GM12878 (cell line): ENCODE measurements at regions of chr1 and their contacts with region 1.

Region 1: GRCh38 chr1:161098210-161099068 is at the start of gene KLHDC9:
- DNase-seq: peak; percentile 87
- ATAC-seq: peak; percentile 91
- H3K4me3 ChIP-seq: peak within 1 kb of the TSS; percentile 74
- H3K27ac ChIP-seq: peak within 1 kb of the TSS; percentile 66
- H3K4me1 ChIP-seq: peaks cover 29% of the 10 kb centered on the region
- H3K27me3 ChIP-seq: no peaks in the 10 kb centered on the region
- CTCF ChIP-seq: peak in 2 of 3 experiments; percentile 20 to 22; a peak in 3 of 6 replicates
- EP300 ChIP-seq: no peak; a peak in 1 of 4 replicates
- POLR2A ChIP-seq: no peak
- RAD21 ChIP-seq: no peak
- polyA plus RNA-seq, gene KLHDC9: 0.66 to 1.3 TPM

Region 2: GRCh38 chr1:160987359-160988062 is 110.9 kb before region 1 on chr1:
- CTCF ChIA-PET with region 1: interaction called, 147 read pairs
- POLR2A ChIA-PET with region 1: interaction called, 5 read pairs
- RAD21 ChIA-PET with region 1: no interaction called
- SMC1A ChIA-PET with region 1: interaction called, 4 read pairs
- in situ Hi-C with region 1: no loop called
- intact Hi-C with region 1: no loop called
- DNase-seq: no peak
- ATAC-seq: no peak
- H3K4me3 ChIP-seq: no peak overlapping the region
- H3K27ac ChIP-seq: no peak overlapping the region
- H3K4me1 ChIP-seq: no peaks in the 10 kb centered on the region; the same call in 1 of the 2 replicates
- H3K27me3 ChIP-seq: no peaks in the 10 kb centered on the region
- CTCF ChIP-seq: no peak
- EP300 ChIP-seq: no peak
- POLR2A ChIP-seq: no peak
- RAD21 ChIP-seq: no peak

Region 3: GRCh38 chr1:161013488-161014230 is 84.8 kb before region 1 on chr1:
- CTCF ChIA-PET with region 1: interaction called, 15 read pairs
- POLR2A ChIA-PET with region 1: interaction called, 5 read pairs
- RAD21 ChIA-PET with region 1: interaction called, 6 read pairs
- SMC1A ChIA-PET with region 1: interaction called, 23 read pairs
- in situ Hi-C with region 1: no loop called
- intact Hi-C with region 1: no loop called
- DNase-seq: peak; percentile 74
- ATAC-seq: peak; percentile 92
- H3K4me3 ChIP-seq: peak overlapping the region; percentile 65
- H3K27ac ChIP-seq: peak overlapping the region; percentile 97
- H3K4me1 ChIP-seq: peaks cover 28% of the 10 kb centered on the region
- H3K27me3 ChIP-seq: no peaks in the 10 kb centered on the region
- CTCF ChIP-seq: no peak
- EP300 ChIP-seq: peak in 1 of 2 experiments; percentile 39; a peak in 1 of 4 replicates
- POLR2A ChIP-seq: peak; percentile 74
- RAD21 ChIP-seq: no peak

Region 4: GRCh38 chr1:161038523-161039153 is 59.8 kb before region 1 on chr1 and contains the start of gene TSTD1:
- CTCF ChIA-PET with region 1: interaction called, 181 read pairs
- POLR2A ChIA-PET with region 1: interaction called, 5 read pairs
- RAD21 ChIA-PET with region 1: interaction called, 40 read pairs
- SMC1A ChIA-PET with region 1: interaction called, 56 read pairs
- in situ Hi-C with region 1: no loop called
- intact Hi-C with region 1: loop called (anchors 1 kb)
- DNase-seq: no peak
- ATAC-seq: peak; percentile 94
- H3K4me3 ChIP-seq: peak within 1 kb of the TSS; percentile 87
- H3K27ac ChIP-seq: peak within 1 kb of the TSS; percentile 69
- H3K4me1 ChIP-seq: peaks cover 12% of the 10 kb centered on the region
- H3K27me3 ChIP-seq: no peaks in the 10 kb centered on the region
- CTCF ChIP-seq: no peak
- EP300 ChIP-seq: no peak
- POLR2A ChIP-seq: peak; percentile 96
- RAD21 ChIP-seq: no peak
- polyA plus RNA-seq, gene TSTD1: 102 to 145 TPM

Region 5: GRCh38 chr1:161132410-161133219 is 34.2 kb after region 1 on chr1 and contains the start of gene DEDD:
- CTCF ChIA-PET with region 1: interaction called, 14 read pairs
- POLR2A ChIA-PET with region 1: interaction called, 5 read pairs
- RAD21 ChIA-PET with region 1: interaction called, 5 read pairs
- SMC1A ChIA-PET with region 1: interaction called, 12 read pairs
- in situ Hi-C with region 1: no loop called
- intact Hi-C with region 1: no loop called
- DNase-seq: peak; percentile 87
- ATAC-seq: peak; percentile 98
- H3K4me3 ChIP-seq: peak within 1 kb of the TSS; percentile 93
- H3K27ac ChIP-seq: peak within 1 kb of the TSS; percentile 79
- H3K4me1 ChIP-seq: peaks cover 3% of the 10 kb centered on the region
- H3K27me3 ChIP-seq: no peaks in the 10 kb centered on the region
- CTCF ChIP-seq: no peak
- EP300 ChIP-seq: peak in 1 of 2 experiments; percentile 51; a peak in 2 of 4 replicates
- POLR2A ChIP-seq: peak; percentile 85
- RAD21 ChIP-seq: no peak
- polyA plus RNA-seq, gene DEDD: 25.5 to 30.0 TPM

Region 6: DNA sequence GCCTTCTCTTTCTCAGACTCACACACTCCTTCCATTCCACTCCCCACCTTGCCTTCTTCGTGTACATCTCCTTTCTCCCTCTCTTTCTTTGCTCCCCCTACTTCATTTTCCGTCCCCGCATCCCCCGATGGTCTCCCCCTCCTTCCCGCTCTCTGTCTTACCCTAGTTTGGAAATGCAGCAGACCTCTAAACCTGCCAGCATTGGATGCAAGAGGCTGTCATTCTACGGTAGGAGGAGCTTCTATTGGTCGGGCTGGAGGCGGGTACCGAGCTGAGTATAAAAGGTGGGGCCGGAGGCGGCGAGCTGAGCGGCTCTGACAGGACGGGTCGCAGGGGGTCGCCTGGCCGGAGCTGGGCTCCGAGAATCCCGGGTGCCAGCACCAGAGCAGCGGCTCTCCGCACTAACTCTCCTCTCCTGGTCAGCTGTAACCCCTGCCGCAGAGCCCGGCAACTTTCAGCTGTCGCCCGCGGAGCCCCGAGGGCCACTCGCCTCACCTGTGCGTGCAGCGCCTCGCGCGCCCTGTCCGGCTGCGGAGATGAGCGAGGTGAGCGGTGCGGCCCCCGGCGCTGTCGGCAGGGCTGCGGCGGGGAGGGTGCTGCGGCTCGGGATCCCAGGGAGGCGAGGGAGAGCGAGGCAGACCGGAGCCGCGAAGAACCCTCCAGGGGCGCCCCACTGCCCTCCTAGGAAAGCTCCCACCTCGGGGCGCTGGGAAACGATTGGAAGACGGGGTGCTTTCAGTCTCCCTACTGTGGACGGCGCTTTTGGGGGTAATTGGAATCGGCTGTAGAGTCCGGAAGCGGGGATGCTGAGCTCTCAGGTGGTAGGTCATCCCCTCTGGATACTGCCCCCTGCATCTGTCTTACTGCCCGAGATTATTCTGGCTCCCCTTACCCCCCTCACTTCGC is 160.3 kb after region 1 on chr1 and contains the start of gene PCP4L1:
- CTCF ChIA-PET with region 1: no interaction called
- POLR2A ChIA-PET with region 1: no interaction called
- RAD21 ChIA-PET with region 1: no interaction called
- SMC1A ChIA-PET with region 1: no interaction called
- in situ Hi-C with region 1: no loop called
- intact Hi-C with region 1: no loop called
- DNase-seq: no peak
- ATAC-seq: peak; percentile 76
- H3K4me3 ChIP-seq: peak within 1 kb of the TSS; percentile 47
- H3K27ac ChIP-seq: no peak within 1 kb of the TSS
- H3K4me1 ChIP-seq: peaks cover 13% of the 10 kb centered on the region
- H3K27me3 ChIP-seq: peaks cover 0 to 5% of the 10 kb centered on the region in 2 experiments; a peak in 1 of 4 replicates
- CTCF ChIP-seq: no peak
- EP300 ChIP-seq: no peak
- POLR2A ChIP-seq: no peak
- RAD21 ChIP-seq: no peak
- polyA plus RNA-seq, gene PCP4L1: 1.0 to 1.1 TPM